Left ventricle myocardium superior (tissue), 1 donor: ENCODE measurements at regions of chr1 and their contacts with region 1.

Region 1: GRCh38 chr1:87292684-87293493 is 35.8 kb upstream of the LMO4 start:
- DNase-seq: no peak
- ATAC-seq: peak; percentile 66

Region 2: DNA sequence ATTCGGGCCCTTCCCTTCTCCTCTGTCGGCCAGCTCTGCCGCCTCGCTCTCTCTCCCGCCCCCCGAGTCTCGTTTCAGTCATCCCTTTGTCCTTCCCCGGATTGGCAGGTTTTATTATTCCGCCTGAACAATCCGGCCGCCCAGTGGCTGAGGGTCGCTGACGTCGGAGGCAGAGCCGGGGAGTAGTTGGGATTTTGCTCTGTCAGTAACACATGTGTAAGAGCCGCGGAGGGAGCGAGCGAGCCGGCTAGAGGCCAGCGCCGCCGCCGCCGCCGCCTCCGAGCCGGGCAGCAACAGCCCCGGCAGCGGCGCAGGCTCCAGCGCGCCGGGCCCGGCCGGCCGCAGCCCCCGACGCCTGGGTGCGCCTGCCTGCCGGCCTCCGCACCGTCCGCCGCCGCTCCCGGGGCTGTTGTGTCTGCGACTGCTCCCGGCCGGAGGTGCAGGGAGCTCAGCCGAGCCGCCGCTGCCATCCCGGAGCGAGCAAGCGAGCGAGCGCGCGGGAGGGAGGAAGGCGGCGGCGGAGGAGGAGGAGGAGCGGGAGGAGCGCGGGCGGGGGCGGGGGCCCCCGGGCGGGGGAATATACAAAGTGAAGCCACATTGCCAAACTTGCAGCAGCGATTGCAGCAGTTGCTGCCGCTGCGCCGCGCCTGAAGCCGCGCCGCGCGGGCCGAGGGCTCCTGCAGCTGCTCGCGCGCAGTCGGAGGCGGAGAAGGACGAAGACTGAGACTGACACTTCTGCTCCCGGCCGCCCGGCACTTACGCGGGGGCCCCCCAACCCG is 35.6 kb after region 1 on chr1 and contains the start of gene LMO4:
- intact Hi-C with region 1: no loop called
- DNase-seq: peak; percentile 97
- ATAC-seq: peak; percentile 84
- total RNA-seq, gene LMO4: 49.2 TPM

Region 3: DNA sequence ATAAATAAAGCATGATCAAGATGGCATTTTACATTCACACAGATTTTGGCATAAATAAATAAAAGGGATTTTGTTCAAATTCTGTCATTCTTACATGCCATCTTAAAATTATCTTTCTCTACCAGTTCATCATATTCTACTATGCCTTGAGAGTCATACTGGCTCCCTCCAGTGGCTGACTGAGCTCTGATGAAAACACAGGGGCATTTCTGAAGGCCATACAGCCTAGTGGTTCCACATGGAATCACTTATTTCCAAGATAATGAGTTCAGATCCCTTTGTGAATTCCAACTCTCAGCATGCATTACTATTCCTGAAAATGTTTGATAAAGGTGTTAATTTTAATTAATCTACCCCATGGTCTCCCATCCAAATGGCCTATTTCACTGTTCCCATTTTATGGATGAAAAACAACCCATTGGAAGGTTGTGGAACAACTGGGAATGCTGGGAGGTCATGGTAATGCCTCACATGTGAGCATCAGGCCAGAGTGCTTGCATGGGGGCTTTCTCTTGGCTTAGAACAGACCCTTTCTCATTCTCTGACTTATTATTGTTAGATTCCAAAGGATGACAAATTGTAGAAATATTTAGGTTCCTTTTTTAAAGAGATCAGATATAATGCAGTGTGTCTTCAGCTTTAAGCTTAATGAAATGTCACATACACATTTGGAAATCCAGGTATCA is 768.7 kb after region 1 on chr1:
- intact Hi-C with region 1: loop called (anchors 10 kb)
- DNase-seq: peak; percentile 43
- ATAC-seq: peak; percentile 82

Region 4: DNA sequence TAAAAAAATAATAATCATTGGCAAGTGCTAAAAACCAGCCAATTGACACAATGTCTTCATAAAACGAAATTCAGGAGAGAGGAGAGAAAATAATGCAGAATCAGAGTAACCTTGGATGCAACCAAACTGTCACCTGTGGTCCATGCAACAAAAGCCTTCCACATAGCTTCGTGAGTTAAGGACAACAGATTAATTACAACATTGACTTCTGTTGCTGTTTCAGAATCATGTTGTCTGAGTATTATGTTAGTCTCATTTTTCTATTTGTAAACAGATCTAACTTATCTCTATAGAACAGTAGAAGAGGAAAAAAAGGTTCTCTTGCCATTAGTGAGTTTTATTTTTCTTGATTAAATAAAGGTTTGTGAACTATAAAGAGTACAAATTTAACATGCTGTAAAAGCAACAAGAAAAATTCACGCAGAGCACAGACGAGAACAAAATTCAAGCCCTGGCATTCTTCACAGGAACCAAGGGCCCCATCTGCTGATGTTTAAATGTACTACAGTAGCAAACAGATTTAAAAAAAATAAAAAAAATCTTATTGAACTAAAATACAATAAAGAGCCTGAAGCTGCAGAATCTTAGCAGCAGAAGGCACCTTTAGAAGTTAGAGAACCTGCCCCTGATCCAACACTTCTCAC is 1010.1 kb after region 1 on chr1:
- intact Hi-C with region 1: loop called (anchors 10 kb)
- DNase-seq: no peak
- ATAC-seq: no peak